CD4-positive, alpha-beta T cell (primary cell): ENCODE measurements at regions of chr11 and their contacts with region 1.

Region 1: GRCh38 chr11:66081505-66081904 is 11.4 kb downstream of the PACS1 start:
- DNase-seq: peak; percentile 62 to 92 (median 79)
- ATAC-seq: peak; percentile 93
- H3K4me3 ChIP-seq: peak overlapping the region; percentile 35
- H3K4me3 Mint-ChIP-seq: peak overlapping the region; percentile 88
- H3K27ac ChIP-seq: peak overlapping the region; percentile 80 to 94
- H3K27ac Mint-ChIP-seq: peak overlapping the region; percentile 88
- H3K4me1 ChIP-seq: peaks cover 87% of the 10 kb centered on the region
- H3K4me1 Mint-ChIP-seq: peaks cover 91% of the 10 kb centered on the region
- H3K27me3 ChIP-seq: no peaks in the 10 kb centered on the region
- H3K27me3 Mint-ChIP-seq: no peaks in the 10 kb centered on the region
- CTCF ChIP-seq: no peak

Region 2: GRCh38 chr11:65558002-65558931 is 523.2 kb before region 1 on chr11 and contains the start of gene LTBP3:
- CTCF ChIA-PET with region 1: no interaction called
- POLR2A ChIA-PET with region 1: no interaction called
- intact Hi-C with region 1: no loop called
- DNase-seq: peak in 7 of 14 experiments; percentile 36 to 73 (median 65)
- ATAC-seq: peak; percentile 39
- H3K4me3 ChIP-seq: peak within 1 kb of the TSS; percentile 63
- H3K4me3 Mint-ChIP-seq: peak within 1 kb of the TSS; percentile 94
- H3K27ac ChIP-seq: peak within 1 kb of the TSS; percentile 80
- H3K27ac Mint-ChIP-seq: peak within 1 kb of the TSS; percentile 87
- H3K4me1 ChIP-seq: peaks cover 80% of the 10 kb centered on the region
- H3K4me1 Mint-ChIP-seq: peaks cover 59% of the 10 kb centered on the region
- H3K27me3 ChIP-seq: no peaks in the 10 kb centered on the region
- H3K27me3 Mint-ChIP-seq: no peaks in the 10 kb centered on the region
- CTCF ChIP-seq: no peak
- total RNA-seq, gene LTBP3: 236 to 238 TPM

Region 3: DNA sequence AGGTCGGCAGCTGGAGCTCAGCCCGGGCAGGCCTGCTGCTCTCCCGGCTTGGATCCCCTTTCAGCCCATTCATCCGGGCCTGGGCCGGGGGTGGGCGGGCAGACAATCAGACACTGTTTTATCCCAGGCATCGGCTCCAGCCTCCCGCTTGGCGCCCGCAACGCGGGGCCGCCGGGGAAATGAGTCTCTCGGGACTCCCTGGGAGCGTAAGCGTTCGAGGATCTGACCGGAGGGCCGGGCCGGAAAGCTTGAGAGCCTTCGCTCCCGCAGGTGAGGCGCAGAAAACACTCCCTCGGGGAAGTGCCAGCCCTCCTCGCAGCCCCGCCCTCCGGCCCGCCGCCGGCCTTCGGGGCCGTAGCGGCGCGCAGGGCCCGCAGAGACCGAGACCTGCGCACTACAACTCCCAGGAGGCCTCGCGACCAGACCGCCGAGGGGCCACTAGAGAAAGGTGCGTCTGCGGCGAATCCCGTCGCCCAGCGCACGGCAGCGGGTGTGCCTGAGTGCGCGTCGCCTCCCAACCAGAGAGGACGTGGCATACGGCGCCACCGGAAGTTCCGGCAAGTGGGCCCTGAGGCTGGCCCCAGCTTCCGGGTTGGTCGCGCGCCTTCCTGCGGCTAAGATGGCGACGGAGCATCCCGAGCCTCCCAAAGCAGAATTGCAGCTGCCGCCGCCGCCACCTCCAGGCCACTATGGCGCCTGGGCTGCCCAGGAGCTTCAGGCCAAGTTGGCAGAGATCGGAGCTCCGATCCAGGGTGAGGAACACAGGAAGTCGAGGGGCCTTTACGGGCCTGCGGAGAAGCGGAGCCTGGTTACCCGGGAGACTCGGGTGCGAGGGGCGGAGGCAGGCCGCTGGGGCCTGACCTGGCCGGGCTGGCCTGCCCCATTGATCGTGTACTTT is 29.5 kb before region 1 on chr11 and contains the start of gene SF3B2:
- CTCF ChIA-PET with region 1: no interaction called
- POLR2A ChIA-PET with region 1: interaction called, 14 read pairs
- intact Hi-C with region 1: no loop called
- DNase-seq: peak; percentile 88 to 99 (median 94)
- ATAC-seq: peak; percentile 95
- H3K4me3 ChIP-seq: peak within 1 kb of the TSS; percentile 100
- H3K4me3 Mint-ChIP-seq: peak within 1 kb of the TSS; percentile 100
- H3K27ac ChIP-seq: peak within 1 kb of the TSS; percentile 66 to 90
- H3K27ac Mint-ChIP-seq: peak within 1 kb of the TSS; percentile 97
- H3K4me1 ChIP-seq: peaks cover 43% of the 10 kb centered on the region
- H3K4me1 Mint-ChIP-seq: peaks cover 37% of the 10 kb centered on the region
- H3K27me3 ChIP-seq: no peaks in the 10 kb centered on the region
- H3K27me3 Mint-ChIP-seq: peaks cover 5% of the 10 kb centered on the region
- CTCF ChIP-seq: no peak
- total RNA-seq, gene SF3B2: 182 to 196 TPM

Region 4: DNA sequence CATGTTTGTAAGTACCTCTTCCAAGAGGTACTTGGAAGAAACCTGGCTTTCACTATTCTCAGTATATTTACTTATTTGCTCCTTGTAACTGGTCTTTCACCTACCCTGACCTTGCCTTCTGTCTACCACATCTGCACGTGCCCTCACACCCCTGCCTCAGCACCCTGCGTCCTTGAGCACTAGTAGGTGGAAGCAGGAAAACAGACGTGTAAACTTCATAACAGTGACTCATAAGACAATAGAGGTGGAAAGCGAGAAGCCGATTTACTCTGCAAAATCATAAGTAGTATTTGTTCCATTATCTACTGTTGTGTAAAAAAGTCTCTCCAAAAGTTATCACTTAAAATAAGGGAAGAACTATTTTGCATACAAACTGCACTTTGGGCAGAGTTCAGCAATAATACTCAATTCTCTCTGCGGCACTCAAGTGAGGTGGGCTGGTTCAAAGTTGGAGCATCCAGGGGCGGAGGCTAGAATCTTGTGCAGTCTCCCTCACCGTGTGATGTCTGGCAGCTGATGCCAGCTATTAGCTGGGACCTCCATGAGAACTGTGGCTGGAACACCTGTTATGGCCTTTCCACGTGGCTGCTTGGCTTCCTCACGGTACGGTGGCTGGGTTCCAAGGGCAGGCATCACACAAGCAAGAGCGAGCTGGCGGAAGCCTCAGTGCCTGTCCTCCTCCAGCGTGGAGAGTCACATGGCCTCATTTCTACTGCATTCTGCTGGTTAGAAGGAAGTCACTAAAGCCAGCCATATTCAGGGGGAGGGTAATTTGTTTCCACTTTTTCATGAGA is 19.0 kb after region 1 on chr11:
- CTCF ChIA-PET with region 1: interaction called, 3 read pairs
- POLR2A ChIA-PET with region 1: interaction called, 56 read pairs
- intact Hi-C with region 1: loop called (anchors 1 to 2 kb)
- DNase-seq: peak; percentile 45 to 88 (median 66)
- ATAC-seq: peak; percentile 95
- H3K4me3 ChIP-seq: peak overlapping the region; percentile 42
- H3K4me3 Mint-ChIP-seq: peak overlapping the region; percentile 84
- H3K27ac ChIP-seq: peak overlapping the region; percentile 78 to 79
- H3K27ac Mint-ChIP-seq: peak overlapping the region; percentile 89
- H3K4me1 ChIP-seq: peaks cover 69% of the 10 kb centered on the region
- H3K4me1 Mint-ChIP-seq: peaks cover 69% of the 10 kb centered on the region
- H3K27me3 ChIP-seq: no peaks in the 10 kb centered on the region
- H3K27me3 Mint-ChIP-seq: no peaks in the 10 kb centered on the region
- CTCF ChIP-seq: no peak

Region 5: GRCh38 chr11:66112601-66113098 is 31.1 kb after region 1 on chr11:
- CTCF ChIA-PET with region 1: interaction called, 4 read pairs
- POLR2A ChIA-PET with region 1: interaction called, 141 read pairs
- intact Hi-C with region 1: loop called in 1 of 2 experiments (anchors 5 kb)
- DNase-seq: peak in 1 of 14 experiments; percentile 34
- ATAC-seq: no peak
- H3K4me3 ChIP-seq: no peak overlapping the region
- H3K4me3 Mint-ChIP-seq: peak overlapping the region; percentile 50
- H3K27ac ChIP-seq: peak overlapping the region; percentile 57 to 66
- H3K27ac Mint-ChIP-seq: peak overlapping the region; percentile 83
- H3K4me1 ChIP-seq: peaks cover 79% of the 10 kb centered on the region
- H3K4me1 Mint-ChIP-seq: peaks cover 95% of the 10 kb centered on the region
- H3K27me3 ChIP-seq: no peaks in the 10 kb centered on the region
- H3K27me3 Mint-ChIP-seq: no peaks in the 10 kb centered on the region
- CTCF ChIP-seq: no peak

Region 6: GRCh38 chr11:66119348-66120133 is 38.0 kb after region 1 on chr11:
- CTCF ChIA-PET with region 1: interaction called, 3 read pairs
- POLR2A ChIA-PET with region 1: interaction called, 141 read pairs
- intact Hi-C with region 1: loop called in 1 of 2 experiments (anchors 5 kb)
- DNase-seq: no peak
- ATAC-seq: peak; percentile 15
- H3K4me3 ChIP-seq: no peak overlapping the region
- H3K4me3 Mint-ChIP-seq: peak overlapping the region; percentile 62
- H3K27ac ChIP-seq: peak overlapping the region; percentile 16 to 41
- H3K27ac Mint-ChIP-seq: peak overlapping the region; percentile 83
- H3K4me1 ChIP-seq: peaks cover 67% of the 10 kb centered on the region
- H3K4me1 Mint-ChIP-seq: peaks cover 94% of the 10 kb centered on the region
- H3K27me3 ChIP-seq: no peaks in the 10 kb centered on the region
- H3K27me3 Mint-ChIP-seq: no peaks in the 10 kb centered on the region
- CTCF ChIP-seq: no peak

Region 7: DNA sequence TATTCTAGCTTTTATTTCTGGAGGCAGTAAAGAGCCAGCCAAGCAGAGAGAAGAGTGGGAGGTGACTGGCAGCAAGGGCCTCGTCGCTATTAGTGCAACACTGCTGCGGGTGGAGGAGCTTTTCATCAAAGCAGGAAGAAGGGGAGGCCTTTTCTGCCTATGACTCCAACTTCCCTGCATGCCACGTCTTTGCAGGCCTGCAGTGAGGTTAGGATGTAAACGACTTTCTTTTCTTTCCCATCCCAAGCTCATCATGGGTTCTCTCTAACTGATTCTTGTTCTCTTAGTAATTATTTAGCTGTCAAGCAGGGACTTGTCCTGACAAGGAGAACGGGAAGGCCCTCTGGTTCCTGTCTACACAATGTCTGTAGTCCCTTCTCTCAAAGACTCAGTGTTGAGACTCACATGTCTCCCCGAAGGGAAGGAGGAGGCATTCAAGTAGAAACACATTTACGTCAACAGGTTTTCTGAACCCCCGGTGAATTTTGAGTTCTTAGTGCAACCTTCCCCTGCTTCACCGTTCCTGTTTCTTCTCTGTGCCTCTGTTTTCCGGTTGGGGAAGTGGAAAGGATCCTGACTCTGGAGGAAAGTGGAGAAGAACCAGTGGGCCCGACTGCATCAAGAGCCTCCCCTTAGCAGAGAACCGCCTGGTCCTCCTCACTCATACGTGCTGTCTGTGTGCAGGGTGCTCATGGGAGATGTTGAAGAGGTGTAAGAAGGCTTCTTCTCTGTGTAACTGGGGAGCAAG is 45.5 kb after region 1 on chr11:
- CTCF ChIA-PET with region 1: interaction called, 16 read pairs
- POLR2A ChIA-PET with region 1: interaction called, 141 read pairs
- intact Hi-C with region 1: loop called in 1 of 2 experiments (anchors 1 kb)
- DNase-seq: peak; percentile 39 to 79 (median 62)
- ATAC-seq: peak; percentile 93
- H3K4me3 ChIP-seq: peak overlapping the region; percentile 16
- H3K4me3 Mint-ChIP-seq: peak overlapping the region; percentile 82
- H3K27ac ChIP-seq: peak overlapping the region; percentile 69 to 73
- H3K27ac Mint-ChIP-seq: peak overlapping the region; percentile 95
- H3K4me1 ChIP-seq: peaks cover 34% of the 10 kb centered on the region
- H3K4me1 Mint-ChIP-seq: peaks cover 82% of the 10 kb centered on the region
- H3K27me3 ChIP-seq: no peaks in the 10 kb centered on the region
- H3K27me3 Mint-ChIP-seq: no peaks in the 10 kb centered on the region
- CTCF ChIP-seq: no peak

Region 8: DNA sequence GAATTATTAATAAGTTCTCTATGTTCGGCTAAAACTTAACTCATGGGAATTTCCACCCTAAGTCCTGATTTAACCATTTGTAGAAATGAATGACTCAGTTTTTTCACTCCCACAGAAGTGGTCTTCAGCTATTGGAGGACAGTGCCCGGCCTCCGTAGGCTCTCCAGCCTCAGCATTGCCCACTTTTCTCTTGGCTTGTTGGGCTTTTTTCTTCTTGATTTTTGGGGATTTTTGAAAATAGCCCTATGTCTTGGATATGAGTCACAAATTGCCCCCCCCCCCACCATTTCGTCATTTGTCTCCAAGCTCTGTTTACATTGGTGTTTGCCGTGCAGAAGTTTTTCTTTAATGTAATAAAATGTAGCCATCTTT is 55.2 kb after region 1 on chr11:
- CTCF ChIA-PET with region 1: interaction called, 4 read pairs
- POLR2A ChIA-PET with region 1: interaction called, 11 read pairs
- intact Hi-C with region 1: no loop called
- DNase-seq: peak in 3 of 14 experiments; percentile 26 to 37 (median 37)
- ATAC-seq: no peak
- H3K4me3 ChIP-seq: no peak overlapping the region
- H3K4me3 Mint-ChIP-seq: no peak overlapping the region
- H3K27ac ChIP-seq: no peak overlapping the region
- H3K27ac Mint-ChIP-seq: peak overlapping the region; percentile 68
- H3K4me1 ChIP-seq: peaks cover 24% of the 10 kb centered on the region
- H3K4me1 Mint-ChIP-seq: peaks cover 59% of the 10 kb centered on the region
- H3K27me3 ChIP-seq: no peaks in the 10 kb centered on the region
- H3K27me3 Mint-ChIP-seq: no peaks in the 10 kb centered on the region
- CTCF ChIP-seq: no peak

Region 9: GRCh38 chr11:66183494-66184048 is 102.1 kb after region 1 on chr11:
- CTCF ChIA-PET with region 1: no interaction called
- POLR2A ChIA-PET with region 1: no interaction called
- intact Hi-C with region 1: no loop called
- DNase-seq: peak in 5 of 14 experiments; percentile 1 to 77 (median 49)
- ATAC-seq: peak; percentile 91
- H3K4me3 ChIP-seq: no peak overlapping the region
- H3K4me3 Mint-ChIP-seq: peak overlapping the region; percentile 11
- H3K27ac ChIP-seq: no peak overlapping the region
- H3K27ac Mint-ChIP-seq: peak overlapping the region; percentile 83
- H3K4me1 ChIP-seq: peaks cover 23% of the 10 kb centered on the region
- H3K4me1 Mint-ChIP-seq: peaks cover 70% of the 10 kb centered on the region
- H3K27me3 ChIP-seq: no peaks in the 10 kb centered on the region
- H3K27me3 Mint-ChIP-seq: no peaks in the 10 kb centered on the region
- CTCF ChIP-seq: no peak

Region 10: GRCh38 chr11:66218846-66219620 is 137.5 kb after region 1 on chr11:
- CTCF ChIA-PET with region 1: no interaction called
- POLR2A ChIA-PET with region 1: no interaction called
- intact Hi-C with region 1: no loop called
- DNase-seq: no peak
- ATAC-seq: no peak
- H3K4me3 ChIP-seq: no peak overlapping the region
- H3K4me3 Mint-ChIP-seq: no peak overlapping the region
- H3K27ac ChIP-seq: no peak overlapping the region
- H3K27ac Mint-ChIP-seq: no peak overlapping the region
- H3K4me1 ChIP-seq: peaks cover 15% of the 10 kb centered on the region
- H3K4me1 Mint-ChIP-seq: peaks cover 7% of the 10 kb centered on the region
- H3K27me3 ChIP-seq: no peaks in the 10 kb centered on the region
- H3K27me3 Mint-ChIP-seq: no peaks in the 10 kb centered on the region
- CTCF ChIP-seq: no peak